Aorta (tissue), 5 donors: ENCODE measurements at regions of chr13 and their contacts with region 1.

Region 1: GRCh38 chr13:101942038-101942437 is 459.8 kb downstream of the FGF14 start:
- DNase-seq: no peak
- ATAC-seq: peak; percentile 78
- H3K4me3 ChIP-seq: no peak overlapping the region
- H3K27ac ChIP-seq: no peak overlapping the region
- H3K4me1 ChIP-seq: peaks cover 1 to 3% of the 10 kb centered on the region in 2 donors
- H3K27me3 ChIP-seq: no peaks in the 10 kb centered on the region

Region 2: DNA sequence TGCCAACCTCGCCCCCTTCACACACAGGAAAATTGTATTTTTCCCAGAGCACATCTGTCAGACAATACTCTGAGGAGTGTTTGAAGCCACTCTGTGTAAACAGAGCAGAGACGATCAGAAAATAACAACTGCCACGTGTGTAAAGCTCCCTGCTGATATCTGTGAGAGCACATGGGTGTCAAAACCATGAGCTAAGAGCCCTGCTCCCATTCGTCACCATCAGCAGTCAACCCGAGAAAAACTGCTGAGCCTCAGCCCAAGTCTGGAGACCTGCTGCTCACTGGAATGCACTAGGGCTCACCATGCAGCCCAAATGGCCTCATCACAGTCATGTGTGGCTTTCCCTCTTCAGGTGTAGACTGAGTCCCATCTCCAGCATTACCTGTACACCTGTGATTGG is 155.7 kb after region 1 on chr13:
- intact Hi-C with region 1: no loop called
- DNase-seq: no peak
- ATAC-seq: no peak
- H3K4me3 ChIP-seq: no peak overlapping the region
- H3K27ac ChIP-seq: no peak overlapping the region
- H3K4me1 ChIP-seq: no peaks in the 10 kb centered on the region
- H3K27me3 ChIP-seq: no peaks in the 10 kb centered on the region

Region 3: GRCh38 chr13:102141625-102142472 is 199.8 kb after region 1 on chr13:
- intact Hi-C with region 1: loop called (anchors 10 kb)
- DNase-seq: no peak
- ATAC-seq: no peak
- H3K4me3 ChIP-seq: no peak overlapping the region
- H3K27ac ChIP-seq: no peak overlapping the region
- H3K4me1 ChIP-seq: peaks cover 0 to 2% of the 10 kb centered on the region in 2 donors
- H3K27me3 ChIP-seq: no peaks in the 10 kb centered on the region

Region 4: GRCh38 chr13:102452831-102453230 is 510.8 kb after region 1 on chr13:
- intact Hi-C with region 1: loop called (anchors 5 to 10 kb)
- DNase-seq: no peak
- ATAC-seq: no peak
- H3K4me3 ChIP-seq: no peak overlapping the region
- H3K27ac ChIP-seq: no peak overlapping the region
- H3K4me1 ChIP-seq: no peaks in the 10 kb centered on the region
- H3K27me3 ChIP-seq: no peaks in the 10 kb centered on the region

Region 5: GRCh38 chr13:102460801-102461200 is 518.8 kb after region 1 on chr13:
- intact Hi-C with region 1: loop called (anchors 5 to 10 kb)
- DNase-seq: no peak
- ATAC-seq: no peak
- H3K4me3 ChIP-seq: no peak overlapping the region
- H3K27ac ChIP-seq: no peak overlapping the region
- H3K4me1 ChIP-seq: no peaks in the 10 kb centered on the region
- H3K27me3 ChIP-seq: no peaks in the 10 kb centered on the region

Region 6: DNA sequence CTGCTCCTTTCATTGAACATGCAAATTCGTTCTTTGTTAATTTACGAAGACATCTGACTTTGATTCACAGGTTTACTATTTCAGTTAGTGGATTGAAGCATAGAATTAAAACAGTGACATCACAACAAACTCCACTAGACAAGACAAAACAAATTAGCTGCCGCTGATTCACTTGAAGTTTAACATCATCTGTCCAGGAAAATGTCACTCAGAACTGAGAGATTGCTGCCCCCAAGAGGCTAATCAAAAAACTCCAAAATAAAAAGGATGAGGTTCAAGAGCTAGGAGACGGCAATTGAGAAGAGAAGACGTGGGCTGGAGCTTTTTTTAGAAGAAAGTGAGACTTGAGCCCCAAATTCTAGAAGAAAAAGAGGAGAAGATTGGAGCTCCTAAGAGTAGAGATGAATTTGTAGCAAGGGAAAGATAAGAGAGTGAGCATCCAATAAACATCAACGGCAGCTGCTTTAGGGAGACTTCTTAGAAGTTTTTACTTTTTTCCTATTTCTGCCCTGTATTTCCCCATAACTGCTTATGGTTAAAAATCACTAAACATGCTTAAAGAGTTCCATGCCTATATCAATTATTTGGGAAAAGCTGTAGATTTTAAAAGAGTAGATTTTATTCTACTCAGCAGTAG is 614.0 kb after region 1 on chr13:
- intact Hi-C with region 1: loop called (anchors 10 kb)
- DNase-seq: no peak
- ATAC-seq: no peak
- H3K4me3 ChIP-seq: peak overlapping the region in 1 of 2 donors; percentile 34
- H3K27ac ChIP-seq: no peak overlapping the region
- H3K4me1 ChIP-seq: no peaks in the 10 kb centered on the region
- H3K27me3 ChIP-seq: no peaks in the 10 kb centered on the region